CD14-positive monocyte (primary cell): ENCODE measurements at regions of chr15 and their contacts with region 1.

Region 1: GRCh38 chr15:82985688-82986441 is at the start of gene RAMAC:
- DNase-seq: peak; percentile 93 to 96 (median 95)
- H3K4me3 ChIP-seq: peak within 1 kb of the TSS; percentile 66 to 84 (median 80)
- H3K4me3 Mint-ChIP-seq: peak within 1 kb of the TSS; percentile 97 to 98
- H3K27ac ChIP-seq: peak within 1 kb of the TSS; percentile 46 to 82
- H3K27ac Mint-ChIP-seq: peak within 1 kb of the TSS; percentile 86 to 96 (median 90)
- H3K4me1 ChIP-seq: peaks cover 15 to 18% of the 10 kb centered on the region in 2 donors
- H3K4me1 Mint-ChIP-seq: peaks cover 19% of the 10 kb centered on the region
- H3K27me3 ChIP-seq: no peaks in the 10 kb centered on the region
- H3K27me3 Mint-ChIP-seq: no peaks in the 10 kb centered on the region
- CTCF ChIP-seq: no peak
- polyA plus RNA-seq, gene RAMAC: 6.1 to 39.9 (median 27.7) TPM

Region 2: GRCh38 chr15:82849556-82850512 is 136.0 kb before region 1 on chr15:
- intact Hi-C with region 1: loop called in 1 of 2 experiments (anchors 5 kb)
- DNase-seq: peak; percentile 76 to 84 (median 80)
- H3K4me3 ChIP-seq: no peak overlapping the region
- H3K4me3 Mint-ChIP-seq: peak overlapping the region; percentile 60 to 81
- H3K27ac ChIP-seq: peak overlapping the region in 1 of 2 donors; percentile 42
- H3K27ac Mint-ChIP-seq: peak overlapping the region in 5 of 7 donors; percentile 4 to 79 (median 64)
- H3K4me1 ChIP-seq: peaks cover 26 to 28% of the 10 kb centered on the region in 2 donors
- H3K4me1 Mint-ChIP-seq: peaks cover 26% of the 10 kb centered on the region
- H3K27me3 ChIP-seq: no peaks in the 10 kb centered on the region
- H3K27me3 Mint-ChIP-seq: peaks cover 0 to 2% (median 1%) of the 10 kb centered on the region in 3 donors
- CTCF ChIP-seq: peak; percentile 85

Region 3: GRCh38 chr15:82952158-82953081 is 33.4 kb before region 1 on chr15 and contains the start of gene HOMER2:
- intact Hi-C with region 1: no loop called
- DNase-seq: no peak
- H3K4me3 ChIP-seq: peak within 1 kb of the TSS in 2 of 3 experiments; percentile 35 to 69
- H3K4me3 Mint-ChIP-seq: peak within 1 kb of the TSS; percentile 72 to 83
- H3K27ac ChIP-seq: no peak within 1 kb of the TSS
- H3K27ac Mint-ChIP-seq: peak within 1 kb of the TSS in 1 of 7 donors; percentile 37
- H3K4me1 ChIP-seq: peaks cover 14% of the 10 kb centered on the region in 2 donors
- H3K4me1 Mint-ChIP-seq: peaks cover 3% of the 10 kb centered on the region
- H3K27me3 ChIP-seq: peaks cover 17 to 24% of the 10 kb centered on the region in 2 donors
- H3K27me3 Mint-ChIP-seq: peaks cover 7 to 18% (median 14%) of the 10 kb centered on the region in 3 donors
- CTCF ChIP-seq: no peak
- polyA plus RNA-seq, gene HOMER2: 0.92 to 2.4 (median 1.6) TPM

Region 4: GRCh38 chr15:83356501-83357399 is 370.9 kb after region 1 on chr15:
- intact Hi-C with region 1: no loop called
- DNase-seq: no peak
- H3K4me3 ChIP-seq: no peak overlapping the region
- H3K4me3 Mint-ChIP-seq: no peak overlapping the region
- H3K27ac ChIP-seq: no peak overlapping the region
- H3K27ac Mint-ChIP-seq: peak overlapping the region in 1 of 7 donors; percentile 23
- H3K4me1 ChIP-seq: no peaks in the 10 kb centered on the region
- H3K4me1 Mint-ChIP-seq: no peaks in the 10 kb centered on the region
- H3K27me3 ChIP-seq: no peaks in the 10 kb centered on the region
- H3K27me3 Mint-ChIP-seq: peaks cover 0 to 10% (median 5%) of the 10 kb centered on the region in 3 donors
- CTCF ChIP-seq: no peak